A673 (cell line): ENCODE measurements at regions of chr16 and their contacts with region 1.

Region 1: GRCh38 chr16:46929378-46930332 is 43.8 kb downstream of the DNAJA2 start:
- DNase-seq: peak; percentile 67
- H3K4me3 ChIP-seq: no peak overlapping the region
- H3K27ac ChIP-seq: no peak overlapping the region
- H3K4me1 ChIP-seq: no peaks in the 10 kb centered on the region
- H3K27me3 ChIP-seq: no peaks in the 10 kb centered on the region
- CTCF ChIP-seq: peak; percentile 95

Region 2: DNA sequence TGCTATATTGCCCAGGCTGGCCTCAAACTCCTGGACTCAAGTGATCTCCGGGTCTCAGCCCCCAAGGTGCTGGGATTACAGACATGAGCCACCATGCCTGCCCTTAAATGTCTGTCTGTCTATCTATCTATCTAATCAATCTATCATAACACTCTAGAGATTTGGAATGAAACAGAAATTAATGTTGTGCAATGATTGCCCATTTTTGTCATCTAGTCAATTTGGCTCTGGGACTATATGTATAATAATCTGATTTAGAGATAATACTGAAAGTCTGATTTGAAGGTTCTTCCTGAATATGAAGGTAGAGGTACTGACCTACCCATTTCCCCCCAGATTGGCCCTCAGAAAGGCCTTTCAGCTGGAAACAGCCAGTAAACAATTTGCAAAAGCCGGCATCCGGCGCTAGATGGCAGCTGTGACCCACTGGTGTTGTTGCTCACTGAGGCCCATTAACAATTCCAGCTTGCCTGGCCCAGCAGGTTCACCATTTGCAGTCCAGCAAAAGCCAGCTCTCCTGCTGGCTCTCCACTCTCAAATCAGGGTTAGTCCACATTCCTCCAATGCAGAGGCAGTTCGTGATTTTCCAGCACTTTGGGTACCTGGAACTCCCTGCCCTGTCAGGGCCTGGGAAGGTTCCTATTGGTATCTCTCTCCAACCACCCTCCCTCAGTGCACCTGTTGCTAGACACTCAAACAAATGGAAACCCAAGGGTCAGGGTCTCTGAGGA is 75.8 kb before region 1 on chr16:
- CTCF ChIA-PET with region 1: interaction called, 6 read pairs
- POLR2A ChIA-PET with region 1: no interaction called
- intact Hi-C with region 1: loop called (anchors 1 kb)
- DNase-seq: peak; percentile 79
- H3K4me3 ChIP-seq: no peak overlapping the region
- H3K27ac ChIP-seq: no peak overlapping the region
- H3K4me1 ChIP-seq: no peaks in the 10 kb centered on the region
- H3K27me3 ChIP-seq: no peaks in the 10 kb centered on the region
- CTCF ChIP-seq: peak; percentile 84

Region 3: GRCh38 chr16:46918861-46919792 is 10.5 kb before region 1 on chr16:
- CTCF ChIA-PET with region 1: no interaction called
- POLR2A ChIA-PET with region 1: no interaction called
- intact Hi-C with region 1: no loop called
- DNase-seq: no peak
- H3K4me3 ChIP-seq: no peak overlapping the region
- H3K27ac ChIP-seq: no peak overlapping the region
- H3K4me1 ChIP-seq: no peaks in the 10 kb centered on the region
- H3K27me3 ChIP-seq: no peaks in the 10 kb centered on the region
- CTCF ChIP-seq: no peak

Region 4: DNA sequence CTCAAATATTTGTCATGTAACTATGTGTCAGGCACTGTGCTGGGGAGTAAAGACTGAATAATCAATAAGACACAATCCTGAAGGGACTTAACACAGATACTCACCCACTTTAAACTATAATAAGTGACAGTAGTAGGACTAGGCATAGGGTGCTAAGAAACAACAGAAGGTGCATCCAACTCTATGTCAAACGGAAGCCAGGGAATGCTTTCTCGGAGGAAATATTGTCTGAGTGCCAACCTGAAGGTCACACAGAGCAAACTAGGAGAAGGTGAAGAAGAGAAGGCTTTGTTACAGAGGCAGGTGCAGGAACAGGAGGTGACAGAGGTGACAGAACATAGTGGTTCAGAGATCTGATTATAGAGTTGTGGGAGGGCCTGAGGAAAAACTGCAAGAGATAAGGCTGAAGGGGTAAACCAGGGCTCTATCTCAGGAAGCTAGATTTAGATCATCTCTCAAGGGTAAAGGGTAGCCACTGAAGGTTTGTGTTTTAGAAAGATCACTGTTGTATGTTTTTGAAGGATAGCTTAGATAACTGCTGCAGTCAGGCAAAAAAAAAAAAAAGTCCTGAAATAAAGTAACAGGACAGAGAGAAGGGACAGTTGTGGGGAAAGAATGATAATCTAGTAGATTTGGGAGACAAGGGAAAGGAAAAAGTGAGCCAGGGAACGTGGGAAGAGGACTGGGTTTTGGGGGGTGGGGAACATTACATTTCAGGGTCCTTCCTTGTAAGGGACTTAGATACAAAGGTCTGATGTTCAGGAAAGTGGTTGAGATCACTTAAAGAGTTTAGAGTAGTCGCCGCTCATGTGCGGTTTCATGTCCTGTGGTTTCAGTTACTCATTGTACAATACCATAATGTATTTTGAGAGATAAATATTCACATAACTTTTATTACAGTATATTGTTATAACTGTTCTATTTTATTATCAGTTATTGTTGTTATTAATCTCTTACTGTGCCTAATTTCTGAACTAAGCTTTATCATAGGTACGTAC is 299.7 kb after region 1 on chr16:
- CTCF ChIA-PET with region 1: no interaction called
- POLR2A ChIA-PET with region 1: no interaction called
- intact Hi-C with region 1: no loop called
- DNase-seq: no peak
- H3K4me3 ChIP-seq: no peak overlapping the region
- H3K27ac ChIP-seq: no peak overlapping the region
- H3K4me1 ChIP-seq: no peaks in the 10 kb centered on the region
- H3K27me3 ChIP-seq: no peaks in the 10 kb centered on the region
- CTCF ChIP-seq: no peak